B cell (primary cell): ENCODE measurements at regions of chr17 and their contacts with region 1.

Region 1: DNA sequence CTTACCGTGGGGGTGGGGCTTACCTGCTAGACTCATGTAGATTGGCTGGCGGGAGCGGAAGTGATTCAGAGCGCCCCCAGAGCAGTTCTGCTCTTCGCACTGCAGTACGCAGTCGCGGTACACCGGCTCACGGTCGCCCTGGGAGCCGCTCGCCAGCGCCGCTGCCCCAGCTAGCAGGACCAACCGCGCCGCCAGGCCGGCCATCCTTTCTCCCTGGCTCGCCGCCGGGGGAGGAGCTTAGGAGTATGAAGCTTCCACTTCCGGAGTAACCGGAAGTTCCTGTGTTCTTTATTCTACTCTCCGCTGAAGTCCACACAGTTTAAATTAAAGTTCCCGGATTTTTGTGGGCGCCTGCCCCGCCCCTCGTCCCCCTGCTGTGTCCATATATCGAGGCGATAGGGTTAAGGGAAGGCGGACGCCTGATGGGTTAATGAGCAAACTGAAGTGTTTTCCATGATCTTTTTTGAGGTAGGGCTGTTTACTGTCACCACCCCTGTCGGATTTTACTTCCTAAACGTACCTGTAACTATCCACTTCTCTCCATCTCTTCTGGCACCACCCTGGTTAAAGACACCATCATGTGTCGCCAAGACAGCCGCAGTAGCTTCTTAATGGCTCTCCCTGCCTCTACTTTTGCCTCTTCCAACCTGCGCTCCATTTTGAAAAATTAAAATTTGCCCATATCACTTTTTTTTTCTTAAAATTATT is at the start of gene PGAP3:
- DNase-seq: peak; percentile 94
- ATAC-seq: peak; percentile 94
- H3K4me3 ChIP-seq: peak within 1 kb of the TSS; percentile 65 to 92 (median 75)
- H3K4me3 Mint-ChIP-seq: peak within 1 kb of the TSS; percentile 99
- H3K27ac ChIP-seq: peak within 1 kb of the TSS; percentile 70 to 87
- H3K27ac Mint-ChIP-seq: peak within 1 kb of the TSS; percentile 98
- H3K4me1 ChIP-seq: peaks cover 15 to 18% of the 10 kb centered on the region in 2 donors
- H3K4me1 Mint-ChIP-seq: peaks cover 21% of the 10 kb centered on the region
- H3K27me3 ChIP-seq: no peaks in the 10 kb centered on the region
- H3K27me3 Mint-ChIP-seq: no peaks in the 10 kb centered on the region
- CTCF ChIP-seq: no peak
- total RNA-seq, gene PGAP3: 34.3 and 36.9 TPM in 2 replicates

Region 2: DNA sequence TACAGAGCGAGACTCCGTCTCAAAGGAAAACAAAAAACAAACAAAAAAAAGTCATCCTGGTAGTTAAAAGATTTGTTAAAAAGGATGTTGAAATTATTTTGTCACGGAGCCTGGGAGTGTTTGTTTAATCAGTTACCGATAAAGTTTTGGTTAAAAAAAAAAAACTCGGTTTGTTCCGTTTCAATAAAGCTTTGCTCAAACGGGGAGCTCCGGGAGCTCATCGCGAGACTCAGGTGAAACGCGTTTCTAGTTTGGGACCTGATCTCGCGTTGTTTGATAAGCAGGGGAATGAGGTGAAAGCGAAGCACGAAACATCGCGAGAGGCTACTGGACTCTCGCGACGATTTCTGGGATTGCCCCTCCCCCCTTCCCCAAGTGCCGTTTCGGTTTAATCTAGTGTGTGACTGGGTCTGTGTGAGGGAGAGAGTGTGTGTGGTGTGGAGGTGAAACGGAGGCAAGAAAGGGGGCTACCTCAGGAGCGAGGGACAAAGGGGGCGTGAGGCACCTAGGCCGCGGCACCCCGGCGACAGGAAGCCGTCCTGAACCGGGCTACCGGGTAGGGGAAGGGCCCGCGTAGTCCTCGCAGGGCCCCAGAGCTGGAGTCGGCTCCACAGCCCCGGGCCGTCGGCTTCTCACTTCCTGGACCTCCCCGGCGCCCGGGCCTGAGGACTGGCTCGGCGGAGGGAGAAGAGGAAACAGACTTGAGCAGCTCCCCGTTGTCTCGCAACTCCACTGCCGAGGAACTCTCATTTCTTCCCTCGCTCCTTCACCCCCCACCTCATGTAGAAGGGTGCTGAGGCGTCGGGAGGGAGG is 226.6 kb before region 1 on chr17 and contains the start of gene CDK12:
- CTCF ChIA-PET with region 1: no interaction called
- POLR2A ChIA-PET with region 1: no interaction called
- intact Hi-C with region 1: loop called (anchors 5 kb)
- DNase-seq: peak; percentile 99
- ATAC-seq: peak; percentile 88
- H3K4me3 ChIP-seq: peak within 1 kb of the TSS; percentile 82 to 98 (median 86)
- H3K4me3 Mint-ChIP-seq: peak within 1 kb of the TSS; percentile 93
- H3K27ac ChIP-seq: peak within 1 kb of the TSS; percentile 94 to 97
- H3K27ac Mint-ChIP-seq: peak within 1 kb of the TSS; percentile 96
- H3K4me1 ChIP-seq: peaks cover 20 to 32% of the 10 kb centered on the region in 2 donors
- H3K4me1 Mint-ChIP-seq: peaks cover 39% of the 10 kb centered on the region
- H3K27me3 ChIP-seq: no peaks in the 10 kb centered on the region
- H3K27me3 Mint-ChIP-seq: no peaks in the 10 kb centered on the region
- CTCF ChIP-seq: no peak
- total RNA-seq, gene CDK12: 117 and 134 TPM in 2 replicates

Region 3: GRCh38 chr17:39636927-39637736 is 50.8 kb before region 1 on chr17 and contains the start of gene STARD3:
- CTCF ChIA-PET with region 1: interaction called, 6 read pairs
- POLR2A ChIA-PET with region 1: no interaction called
- intact Hi-C with region 1: loop called (anchors 1 kb)
- DNase-seq: peak; percentile 93
- ATAC-seq: peak; percentile 92
- H3K4me3 ChIP-seq: peak within 1 kb of the TSS; percentile 76 to 94 (median 82)
- H3K4me3 Mint-ChIP-seq: peak within 1 kb of the TSS; percentile 95
- H3K27ac ChIP-seq: peak within 1 kb of the TSS; percentile 89 to 90
- H3K27ac Mint-ChIP-seq: peak within 1 kb of the TSS; percentile 91
- H3K4me1 ChIP-seq: peaks cover 49 to 63% of the 10 kb centered on the region in 2 donors
- H3K4me1 Mint-ChIP-seq: peaks cover 60% of the 10 kb centered on the region
- H3K27me3 ChIP-seq: peaks cover 0 to 3% (median 0%) of the 10 kb centered on the region in 4 experiments
- H3K27me3 Mint-ChIP-seq: no peaks in the 10 kb centered on the region
- CTCF ChIP-seq: no peak
- total RNA-seq, gene STARD3: 93.1 and 101 TPM in 2 replicates

Region 4: GRCh38 chr17:39668199-39668966 is 19.6 kb before region 1 on chr17 and contains the start of gene PNMT:
- CTCF ChIA-PET with region 1: interaction called, 48 read pairs
- POLR2A ChIA-PET with region 1: no interaction called
- intact Hi-C with region 1: loop called (anchors 2 kb)
- DNase-seq: peak; percentile 82
- ATAC-seq: peak; percentile 76
- H3K4me3 ChIP-seq: peak within 1 kb of the TSS in 4 of 5 experiments; percentile 28 to 62 (median 53)
- H3K4me3 Mint-ChIP-seq: peak within 1 kb of the TSS; percentile 75
- H3K27ac ChIP-seq: no peak within 1 kb of the TSS
- H3K27ac Mint-ChIP-seq: peak within 1 kb of the TSS; percentile 7
- H3K4me1 ChIP-seq: peaks cover 24 to 36% of the 10 kb centered on the region in 2 donors
- H3K4me1 Mint-ChIP-seq: peaks cover 27% of the 10 kb centered on the region
- H3K27me3 ChIP-seq: peaks cover 0 to 37% (median 7%) of the 10 kb centered on the region in 4 experiments
- H3K27me3 Mint-ChIP-seq: peaks cover 23% of the 10 kb centered on the region
- CTCF ChIP-seq: peak; percentile 79
- total RNA-seq, gene PNMT: 0.39 and 0.76 TPM in 2 replicates

Region 5: DNA sequence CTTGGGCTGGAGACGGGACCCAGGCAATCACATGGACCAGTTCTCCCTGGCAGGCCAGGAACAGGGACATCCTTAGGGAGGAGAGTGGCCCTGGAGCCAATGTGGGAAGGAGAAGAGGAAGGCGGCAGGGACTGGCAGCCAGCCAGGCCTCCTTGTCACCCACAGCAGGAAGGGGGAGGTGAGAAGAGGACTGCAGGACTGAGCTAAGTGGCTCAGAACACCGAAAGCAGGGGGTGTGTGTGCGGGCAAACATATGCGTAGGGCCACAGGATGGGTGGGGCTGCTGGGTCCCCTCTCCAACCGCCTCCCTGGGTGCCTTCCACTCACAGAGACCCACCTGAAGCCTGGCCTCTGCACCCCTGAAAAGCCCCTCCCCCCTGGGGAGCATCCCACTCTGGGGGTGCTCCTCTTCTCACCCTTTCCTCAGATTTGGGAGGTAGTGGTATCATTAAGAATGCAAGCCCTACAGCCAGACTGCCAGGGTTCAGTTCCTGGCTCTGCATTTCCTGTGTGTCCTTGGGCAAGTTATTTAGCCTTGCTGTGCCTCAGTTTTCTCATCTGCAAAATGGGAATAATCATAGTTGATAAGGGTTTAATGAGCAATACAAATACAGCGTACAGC is 11.7 kb before region 1 on chr17:
- CTCF ChIA-PET with region 1: interaction called, 48 read pairs
- POLR2A ChIA-PET with region 1: interaction called, 14 read pairs
- intact Hi-C with region 1: loop called (anchors 1 kb)
- DNase-seq: peak; percentile 69
- ATAC-seq: peak; percentile 61
- H3K4me3 ChIP-seq: no peak overlapping the region
- H3K4me3 Mint-ChIP-seq: peak overlapping the region; percentile 68
- H3K27ac ChIP-seq: peak overlapping the region; percentile 65 to 94
- H3K27ac Mint-ChIP-seq: peak overlapping the region; percentile 98
- H3K4me1 ChIP-seq: peaks cover 79 to 96% of the 10 kb centered on the region in 2 donors
- H3K4me1 Mint-ChIP-seq: peaks cover 85% of the 10 kb centered on the region
- H3K27me3 ChIP-seq: peaks cover 0 to 3% (median 0%) of the 10 kb centered on the region in 4 experiments
- H3K27me3 Mint-ChIP-seq: no peaks in the 10 kb centered on the region
- CTCF ChIP-seq: no peak